ENCODE measurements at regions of chr19 and their contacts with region 1.

Region 1: DNA sequence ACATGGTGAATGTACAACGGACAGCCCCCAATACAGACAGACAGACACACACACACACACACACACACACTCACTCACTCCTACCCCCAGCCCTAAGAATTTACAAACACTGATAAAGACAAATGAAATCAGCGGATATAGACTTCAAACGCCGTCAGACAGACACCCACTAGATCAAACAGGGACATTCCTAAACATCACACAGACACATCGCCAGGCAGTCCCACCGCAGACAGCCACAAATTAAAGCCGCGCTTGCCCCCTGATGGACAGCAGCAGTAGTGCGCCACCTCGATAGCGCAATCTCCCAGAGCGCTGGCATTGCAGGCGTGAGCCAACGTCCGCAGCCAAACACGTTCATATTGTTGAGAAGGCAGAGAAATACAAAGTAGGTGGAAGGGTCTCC is 24.7 kb upstream of the ADGRE1 start:
- DNase-seq: peak; percentile 89 to 93 (median 90)
- H3K4me3 ChIP-seq: no peak overlapping the region
- H3K4me3 Mint-ChIP-seq: peak overlapping the region; percentile 83 to 90 (median 86)
- H3K27ac ChIP-seq: peak overlapping the region; percentile 48
- H3K27ac Mint-ChIP-seq: peak overlapping the region; percentile 71 to 97 (median 87)
- H3K4me1 ChIP-seq: peaks cover 11% of the 10 kb centered on the region
- H3K4me1 Mint-ChIP-seq: peaks cover 11 to 24% (median 16%) of the 10 kb centered on the region in 4 donors
- H3K27me3 ChIP-seq: no peaks in the 10 kb centered on the region
- H3K27me3 Mint-ChIP-seq: no peaks in the 10 kb centered on the region

Region 2: DNA sequence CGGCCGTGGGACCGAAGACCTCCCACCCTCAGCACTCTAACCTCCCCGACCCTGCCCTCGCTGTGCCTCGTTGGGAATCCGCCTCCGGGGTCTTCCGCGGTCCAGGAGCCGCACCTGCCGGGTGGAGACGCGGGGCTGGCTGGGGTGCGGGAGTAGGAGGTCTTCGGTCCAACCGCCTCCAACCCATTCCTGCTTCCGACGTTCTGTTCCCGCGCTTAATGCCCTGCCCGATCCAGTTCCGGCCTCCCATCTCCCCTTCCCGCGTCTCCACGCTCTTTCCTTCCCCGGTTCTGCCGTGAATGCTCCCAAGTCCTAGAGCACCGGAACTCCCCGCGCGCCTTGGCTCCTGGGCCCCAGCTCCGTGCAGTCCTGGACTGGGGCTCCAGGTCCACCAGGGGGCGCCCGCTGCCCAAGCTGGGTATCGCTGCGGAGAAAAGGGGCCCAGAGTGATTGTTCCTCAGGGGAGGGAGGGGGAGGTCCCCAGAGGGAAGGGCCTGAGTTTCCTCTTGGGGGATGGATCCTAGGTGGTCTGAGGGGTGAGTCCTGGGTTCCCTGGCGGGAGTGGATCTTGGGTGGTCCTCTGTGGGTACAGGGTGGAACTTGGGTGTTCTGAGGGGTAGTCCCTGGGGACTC is 345.9 kb before region 1 on chr19:
- CTCF ChIA-PET with region 1: interaction called, 54 read pairs
- POLR2A ChIA-PET with region 1: interaction called, 7 read pairs
- intact Hi-C with region 1: loop called (anchors 1 kb)
- DNase-seq: peak; percentile 80 to 89 (median 85)
- H3K4me3 ChIP-seq: peak overlapping the region; percentile 30 to 70
- H3K4me3 Mint-ChIP-seq: peak overlapping the region; percentile 93 to 98 (median 96)
- H3K27ac ChIP-seq: peak overlapping the region; percentile 45
- H3K27ac Mint-ChIP-seq: peak overlapping the region; percentile 42 to 96 (median 84)
- H3K4me1 ChIP-seq: peaks cover 27% of the 10 kb centered on the region
- H3K4me1 Mint-ChIP-seq: peaks cover 21 to 38% (median 27%) of the 10 kb centered on the region in 4 donors
- H3K27me3 ChIP-seq: no peaks in the 10 kb centered on the region
- H3K27me3 Mint-ChIP-seq: no peaks in the 10 kb centered on the region

Region 3: GRCh38 chr19:6632002-6632621 is 230.6 kb before region 1 on chr19:
- CTCF ChIA-PET with region 1: interaction called, 69 read pairs
- POLR2A ChIA-PET with region 1: interaction called, 4 read pairs
- intact Hi-C with region 1: loop called (anchors 1 kb)
- DNase-seq: peak; percentile 78 to 86 (median 82)
- H3K4me3 ChIP-seq: no peak overlapping the region
- H3K4me3 Mint-ChIP-seq: no peak overlapping the region
- H3K27ac ChIP-seq: no peak overlapping the region
- H3K27ac Mint-ChIP-seq: peak overlapping the region in 3 of 7 donors; percentile 3 to 24 (median 22)
- H3K4me1 ChIP-seq: peaks cover 7% of the 10 kb centered on the region
- H3K4me1 Mint-ChIP-seq: peaks cover 8 to 15% (median 10%) of the 10 kb centered on the region in 4 donors
- H3K27me3 ChIP-seq: no peaks in the 10 kb centered on the region
- H3K27me3 Mint-ChIP-seq: peaks cover 1 to 2% of the 10 kb centered on the region in 2 donors

Region 4: GRCh38 chr19:6767357-6768235 is 95.1 kb before region 1 on chr19 and contains the start of gene SH2D3A:
- CTCF ChIA-PET with region 1: interaction called, 14 read pairs
- POLR2A ChIA-PET with region 1: interaction called, 15 read pairs
- intact Hi-C with region 1: loop called (anchors 1 kb)
- DNase-seq: peak; percentile 96 to 99 (median 96)
- H3K4me3 ChIP-seq: peak within 1 kb of the TSS; percentile 63 to 80
- H3K4me3 Mint-ChIP-seq: peak within 1 kb of the TSS; percentile 91 to 98 (median 94)
- H3K27ac ChIP-seq: peak within 1 kb of the TSS; percentile 97
- H3K27ac Mint-ChIP-seq: peak within 1 kb of the TSS; percentile 89 to 99 (median 96)
- H3K4me1 ChIP-seq: peaks cover 54% of the 10 kb centered on the region
- H3K4me1 Mint-ChIP-seq: peaks cover 31 to 67% (median 44%) of the 10 kb centered on the region in 4 donors
- H3K27me3 ChIP-seq: no peaks in the 10 kb centered on the region
- H3K27me3 Mint-ChIP-seq: no peaks in the 10 kb centered on the region
- total RNA-seq, gene SH2D3A: 59.3 to 64.3 TPM

Region 5: DNA sequence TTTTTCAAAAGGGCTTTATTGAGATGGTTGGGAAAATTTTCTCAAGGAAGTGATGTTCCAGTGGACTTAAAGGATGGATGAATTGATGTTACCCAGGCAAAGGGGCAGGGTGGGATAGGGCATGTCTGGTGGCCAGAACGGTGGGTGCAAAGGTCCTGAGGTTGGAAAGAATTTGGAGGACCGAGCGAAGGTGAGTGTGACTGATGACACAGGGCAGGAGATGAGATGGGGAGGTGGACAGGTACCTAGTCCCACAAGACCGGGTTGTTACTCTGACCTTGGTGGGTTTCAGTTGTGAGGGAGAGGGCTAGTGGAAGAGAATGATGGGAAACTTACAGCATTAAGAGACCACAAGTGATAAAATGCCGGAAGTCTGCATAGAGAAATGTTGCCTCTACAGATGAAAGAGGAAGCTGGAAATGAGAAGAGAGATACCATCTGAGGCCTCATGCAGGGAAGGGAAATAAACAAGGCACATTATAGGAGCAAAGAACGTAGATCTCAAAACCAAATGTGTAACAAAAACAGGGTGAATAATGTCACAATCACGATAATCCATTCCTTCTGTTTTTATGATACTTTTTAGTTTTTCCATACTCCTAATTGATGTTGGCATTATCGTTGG is 29.2 kb after region 1 on chr19:
- CTCF ChIA-PET with region 1: interaction called, 51 read pairs
- POLR2A ChIA-PET with region 1: interaction called, 43 read pairs
- intact Hi-C with region 1: loop called (anchors 1 kb)
- DNase-seq: peak in 4 of 5 donors; percentile 26 to 48 (median 29)
- H3K4me3 ChIP-seq: no peak overlapping the region
- H3K4me3 Mint-ChIP-seq: peak overlapping the region; percentile 67 to 80 (median 74)
- H3K27ac ChIP-seq: peak overlapping the region; percentile 3
- H3K27ac Mint-ChIP-seq: peak overlapping the region; percentile 78 to 95 (median 90)
- H3K4me1 ChIP-seq: peaks cover 68% of the 10 kb centered on the region
- H3K4me1 Mint-ChIP-seq: peaks cover 64 to 95% (median 75%) of the 10 kb centered on the region in 4 donors
- H3K27me3 ChIP-seq: no peaks in the 10 kb centered on the region
- H3K27me3 Mint-ChIP-seq: no peaks in the 10 kb centered on the region

Region 6: DNA sequence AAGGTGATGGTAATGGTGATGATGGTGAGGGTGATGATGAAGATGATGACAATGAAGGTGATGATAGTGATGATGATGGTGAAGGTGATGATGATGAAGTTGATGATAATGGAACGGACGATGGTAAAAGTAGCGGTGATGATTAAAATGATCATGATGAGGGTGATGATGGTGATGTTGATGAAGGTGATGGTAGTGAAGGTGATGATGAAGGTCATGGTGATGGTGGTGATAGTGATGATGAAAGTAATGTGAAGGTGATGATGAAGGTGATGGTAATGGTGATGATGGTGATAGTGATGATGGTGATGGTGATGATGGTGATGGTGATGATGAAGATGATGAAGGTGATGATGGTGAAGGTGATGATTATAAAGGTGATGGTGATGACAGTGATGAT is 92.4 kb after region 1 on chr19:
- CTCF ChIA-PET with region 1: no interaction called
- POLR2A ChIA-PET with region 1: no interaction called
- intact Hi-C with region 1: no loop called
- DNase-seq: no peak
- H3K4me3 ChIP-seq: no peak overlapping the region
- H3K4me3 Mint-ChIP-seq: no peak overlapping the region
- H3K27ac ChIP-seq: no peak overlapping the region
- H3K27ac Mint-ChIP-seq: no peak overlapping the region
- H3K4me1 ChIP-seq: no peaks in the 10 kb centered on the region
- H3K4me1 Mint-ChIP-seq: no peaks in the 10 kb centered on the region
- H3K27me3 ChIP-seq: no peaks in the 10 kb centered on the region
- H3K27me3 Mint-ChIP-seq: peaks cover 0 to 3% of the 10 kb centered on the region in 2 donors

Region 7: DNA sequence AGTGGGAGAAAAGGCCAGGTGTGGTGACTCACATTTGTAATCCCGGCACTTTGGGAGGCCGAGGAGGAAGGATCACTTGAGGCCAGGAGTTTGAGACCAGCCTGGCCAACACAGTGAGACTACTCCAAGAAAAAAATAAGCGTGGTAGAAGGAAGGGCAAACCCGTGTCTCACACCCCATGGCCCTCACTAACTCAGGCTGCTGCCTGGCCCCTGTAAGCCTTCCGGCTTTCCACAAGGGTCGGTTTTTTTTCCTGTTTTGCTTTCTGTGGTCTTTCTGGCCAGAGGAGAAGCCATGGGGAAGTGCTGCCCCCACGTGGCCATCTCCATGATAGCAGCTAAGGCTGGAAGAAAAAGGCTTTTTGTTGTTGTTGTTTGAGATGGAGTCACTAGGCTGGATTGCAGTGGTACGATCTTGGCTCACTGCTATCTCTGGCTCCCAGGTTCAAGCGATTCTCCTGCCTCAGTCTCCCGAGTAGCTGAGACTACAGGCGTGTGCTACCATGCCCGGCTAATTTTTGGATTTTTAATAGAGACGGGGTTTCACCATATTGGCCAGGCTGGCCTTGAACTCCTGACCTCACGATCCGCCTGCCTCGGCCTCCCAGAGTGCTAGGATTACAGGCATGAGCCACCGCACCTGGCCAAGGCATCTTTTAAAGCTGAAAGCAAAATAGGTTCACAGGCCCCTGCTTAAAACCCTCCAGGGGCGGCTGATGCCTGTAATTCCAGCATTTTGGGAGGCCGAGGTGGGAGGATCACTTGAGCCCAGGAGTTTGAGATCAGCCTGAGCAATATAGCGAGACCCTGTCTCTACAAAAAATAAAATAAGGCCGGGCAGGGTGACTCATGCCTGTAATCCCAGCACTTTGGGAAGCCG is 478.5 kb after region 1 on chr19:
- CTCF ChIA-PET with region 1: no interaction called
- POLR2A ChIA-PET with region 1: no interaction called
- intact Hi-C with region 1: loop called (anchors 2 kb)
- DNase-seq: peak; percentile 70 to 81 (median 79)
- H3K4me3 ChIP-seq: no peak overlapping the region
- H3K4me3 Mint-ChIP-seq: peak overlapping the region in 6 of 8 donors; percentile 17 to 72 (median 66)
- H3K27ac ChIP-seq: no peak overlapping the region
- H3K27ac Mint-ChIP-seq: peak overlapping the region; percentile 54 to 92 (median 85)
- H3K4me1 ChIP-seq: peaks cover 67% of the 10 kb centered on the region
- H3K4me1 Mint-ChIP-seq: peaks cover 44 to 65% (median 50%) of the 10 kb centered on the region in 4 donors
- H3K27me3 ChIP-seq: no peaks in the 10 kb centered on the region
- H3K27me3 Mint-ChIP-seq: no peaks in the 10 kb centered on the region

Measured in CD4-positive, alpha-beta memory T cell (primary cell).